ENCODE measurements at regions of chr19 and their contacts with region 1.

Region 1: GRCh38 chr19:52048555-52049501 is at the start of gene ZNF432:
- DNase-seq: peak; percentile 75 to 87 (median 82)
- ATAC-seq: peak; percentile 92
- H3K4me3 ChIP-seq: peak within 1 kb of the TSS; percentile 78
- H3K4me3 Mint-ChIP-seq: peak within 1 kb of the TSS; percentile 95 to 100 (median 98)
- H3K27ac ChIP-seq: peak within 1 kb of the TSS; percentile 97
- H3K27ac Mint-ChIP-seq: peak within 1 kb of the TSS; percentile 97 to 99 (median 99)
- H3K4me1 ChIP-seq: peaks cover 0 to 7% of the 10 kb centered on the region in 2 donors
- H3K4me1 Mint-ChIP-seq: peaks cover 10 to 43% (median 25%) of the 10 kb centered on the region in 7 donors
- H3K27me3 ChIP-seq: no peaks in the 10 kb centered on the region
- H3K27me3 Mint-ChIP-seq: no peaks in the 10 kb centered on the region
- total RNA-seq, gene ZNF432: 13.2 to 25.0 (median 18.1) TPM

Region 2: DNA sequence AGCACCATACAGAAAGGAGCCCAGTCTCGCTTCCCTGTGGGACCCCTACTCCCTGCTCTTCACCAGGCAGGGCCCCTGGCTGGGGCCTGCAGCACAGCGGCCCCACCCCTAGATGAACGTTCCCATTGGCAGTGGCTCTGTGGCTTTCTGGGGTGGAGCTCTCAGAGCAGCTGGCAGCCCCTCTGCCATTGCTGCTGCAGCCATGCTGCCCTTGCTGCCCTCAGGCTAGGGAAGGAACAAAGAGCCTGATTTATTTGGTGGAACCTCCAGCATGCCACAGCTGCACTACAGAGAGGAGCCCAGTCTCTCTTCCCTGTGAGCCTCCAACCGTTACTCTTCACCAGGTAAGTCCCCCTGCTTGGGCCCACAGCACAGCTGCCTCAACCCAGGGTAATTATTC is 523.1 kb before region 1 on chr19:
- CTCF ChIA-PET with region 1: no interaction called
- POLR2A ChIA-PET with region 1: no interaction called
- intact Hi-C with region 1: no loop called
- DNase-seq: no peak
- ATAC-seq: no peak
- H3K4me3 ChIP-seq: no peak overlapping the region
- H3K4me3 Mint-ChIP-seq: no peak overlapping the region
- H3K27ac ChIP-seq: no peak overlapping the region
- H3K27ac Mint-ChIP-seq: no peak overlapping the region
- H3K4me1 ChIP-seq: no peaks in the 10 kb centered on the region
- H3K4me1 Mint-ChIP-seq: peaks cover 0 to 2% (median 0%) of the 10 kb centered on the region in 7 donors
- H3K27me3 ChIP-seq: no peaks in the 10 kb centered on the region
- H3K27me3 Mint-ChIP-seq: peaks cover 27 to 50% (median 33%) of the 10 kb centered on the region in 5 donors

Region 3: GRCh38 chr19:51576850-51577249 is 472.0 kb before region 1 on chr19:
- CTCF ChIA-PET with region 1: no interaction called
- POLR2A ChIA-PET with region 1: no interaction called
- intact Hi-C with region 1: no loop called
- DNase-seq: no peak
- ATAC-seq: no peak
- H3K4me3 ChIP-seq: no peak overlapping the region
- H3K4me3 Mint-ChIP-seq: no peak overlapping the region
- H3K27ac ChIP-seq: no peak overlapping the region
- H3K27ac Mint-ChIP-seq: no peak overlapping the region
- H3K4me1 ChIP-seq: peaks cover 0 to 2% of the 10 kb centered on the region in 2 donors
- H3K4me1 Mint-ChIP-seq: peaks cover 11 to 25% (median 19%) of the 10 kb centered on the region in 7 donors
- H3K27me3 ChIP-seq: no peaks in the 10 kb centered on the region
- H3K27me3 Mint-ChIP-seq: no peaks in the 10 kb centered on the region

Region 4: DNA sequence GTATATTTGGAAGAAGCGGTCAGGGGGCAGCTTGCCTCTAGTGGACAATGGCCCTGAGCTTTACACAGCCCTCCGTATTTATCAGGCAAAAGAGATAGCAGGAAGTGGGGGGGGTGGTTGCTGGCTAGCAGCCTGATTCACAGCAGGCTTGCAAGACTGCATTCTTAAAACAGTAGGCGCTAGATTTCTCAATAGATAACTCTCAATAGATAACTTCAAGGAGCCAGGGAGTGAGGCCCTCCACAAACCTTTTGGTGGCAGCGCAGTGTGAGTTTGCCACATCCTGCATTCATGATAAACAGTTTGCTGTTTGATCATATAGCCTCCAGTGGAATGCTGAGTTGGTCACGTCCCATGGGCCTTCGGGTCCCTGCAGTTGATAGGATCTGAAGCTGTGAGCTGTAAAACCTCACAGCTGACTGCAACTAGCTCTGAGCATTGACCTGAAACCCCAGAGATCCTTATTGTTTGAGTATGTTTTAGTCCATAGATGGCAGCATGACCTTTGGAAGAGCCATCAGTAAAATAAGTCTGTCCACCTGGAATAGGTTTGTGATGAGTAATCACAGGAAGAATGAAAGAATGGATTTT is 241.6 kb before region 1 on chr19:
- CTCF ChIA-PET with region 1: no interaction called
- POLR2A ChIA-PET with region 1: no interaction called
- intact Hi-C with region 1: no loop called
- DNase-seq: no peak
- ATAC-seq: no peak
- H3K4me3 ChIP-seq: no peak overlapping the region
- H3K4me3 Mint-ChIP-seq: no peak overlapping the region
- H3K27ac ChIP-seq: no peak overlapping the region
- H3K27ac Mint-ChIP-seq: no peak overlapping the region
- H3K4me1 ChIP-seq: no peaks in the 10 kb centered on the region
- H3K4me1 Mint-ChIP-seq: peaks cover 0 to 7% (median 0%) of the 10 kb centered on the region in 7 donors
- H3K27me3 ChIP-seq: no peaks in the 10 kb centered on the region
- H3K27me3 Mint-ChIP-seq: peaks cover 0 to 15% (median 3%) of the 10 kb centered on the region in 5 donors

Region 5: DNA sequence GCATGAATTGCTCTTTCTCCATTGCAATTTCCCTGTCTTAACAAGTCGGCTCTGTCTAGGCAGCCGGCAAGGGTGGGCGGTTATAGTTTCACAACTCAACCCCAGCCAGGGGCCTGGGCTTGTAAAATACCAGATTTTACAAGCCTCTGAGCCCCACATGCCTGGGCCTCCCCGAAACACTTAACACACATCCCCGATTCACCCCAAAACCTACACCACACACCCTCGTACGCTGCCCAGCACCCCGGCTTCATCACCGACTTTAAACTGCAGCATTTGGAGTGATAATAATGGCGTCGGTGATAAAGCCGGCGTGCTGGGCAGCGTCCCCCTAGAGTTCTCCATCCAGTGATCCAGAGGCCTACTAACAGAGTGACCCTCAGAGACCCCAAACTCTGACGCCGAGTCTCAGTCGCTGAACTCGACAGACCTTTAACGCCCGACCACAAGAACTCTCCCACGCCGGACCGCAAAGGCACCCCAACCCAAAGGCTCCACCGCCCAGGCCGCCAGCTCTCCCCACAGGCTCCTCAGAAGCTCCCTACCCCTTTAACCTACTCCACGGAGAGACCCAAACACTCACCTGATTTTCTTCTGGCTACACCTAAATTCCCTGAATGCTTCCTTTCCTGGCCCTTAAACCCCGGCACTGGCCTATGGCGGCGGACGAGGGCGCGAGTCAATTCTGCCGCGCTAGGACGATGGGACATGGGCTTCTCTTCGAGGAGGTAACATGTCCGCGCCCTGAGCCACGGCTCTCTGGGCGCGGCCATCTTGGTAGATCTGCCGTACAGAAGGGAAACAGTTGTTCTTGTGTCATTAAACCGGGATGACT is 144.3 kb before region 1 on chr19 and contains the start of gene ZNF649:
- CTCF ChIA-PET with region 1: no interaction called
- POLR2A ChIA-PET with region 1: no interaction called
- intact Hi-C with region 1: loop called (anchors 1 kb)
- DNase-seq: peak; percentile 67 to 84 (median 74)
- ATAC-seq: peak; percentile 98
- H3K4me3 ChIP-seq: peak within 1 kb of the TSS; percentile 84
- H3K4me3 Mint-ChIP-seq: peak within 1 kb of the TSS; percentile 87 to 100 (median 99)
- H3K27ac ChIP-seq: peak within 1 kb of the TSS; percentile 84
- H3K27ac Mint-ChIP-seq: peak within 1 kb of the TSS; percentile 89 to 99 (median 97)
- H3K4me1 ChIP-seq: peaks cover 0 to 5% of the 10 kb centered on the region in 2 donors
- H3K4me1 Mint-ChIP-seq: peaks cover 8 to 33% (median 28%) of the 10 kb centered on the region in 7 donors
- H3K27me3 ChIP-seq: no peaks in the 10 kb centered on the region
- H3K27me3 Mint-ChIP-seq: peaks cover 0 to 31% (median 19%) of the 10 kb centered on the region in 5 donors
- total RNA-seq, gene ZNF649: 11.1 to 33.4 (median 14.5) TPM

Region 6: GRCh38 chr19:51986309-51987291 is 62.2 kb before region 1 on chr19 and contains the start of gene ZNF350:
- CTCF ChIA-PET with region 1: no interaction called
- POLR2A ChIA-PET with region 1: no interaction called
- intact Hi-C with region 1: loop called (anchors 1 kb)
- DNase-seq: peak; percentile 61 to 94 (median 89)
- ATAC-seq: peak; percentile 100
- H3K4me3 ChIP-seq: peak within 1 kb of the TSS; percentile 89
- H3K4me3 Mint-ChIP-seq: peak within 1 kb of the TSS; percentile 93 to 99 (median 96)
- H3K27ac ChIP-seq: peak within 1 kb of the TSS; percentile 82
- H3K27ac Mint-ChIP-seq: peak within 1 kb of the TSS; percentile 91 to 98 (median 94)
- H3K4me1 ChIP-seq: peaks cover 6 to 10% of the 10 kb centered on the region in 2 donors
- H3K4me1 Mint-ChIP-seq: peaks cover 10 to 33% (median 20%) of the 10 kb centered on the region in 7 donors
- H3K27me3 ChIP-seq: no peaks in the 10 kb centered on the region
- H3K27me3 Mint-ChIP-seq: no peaks in the 10 kb centered on the region
- total RNA-seq, gene ZNF350: 18.1 to 43.7 (median 36.0) TPM

Region 7: DNA sequence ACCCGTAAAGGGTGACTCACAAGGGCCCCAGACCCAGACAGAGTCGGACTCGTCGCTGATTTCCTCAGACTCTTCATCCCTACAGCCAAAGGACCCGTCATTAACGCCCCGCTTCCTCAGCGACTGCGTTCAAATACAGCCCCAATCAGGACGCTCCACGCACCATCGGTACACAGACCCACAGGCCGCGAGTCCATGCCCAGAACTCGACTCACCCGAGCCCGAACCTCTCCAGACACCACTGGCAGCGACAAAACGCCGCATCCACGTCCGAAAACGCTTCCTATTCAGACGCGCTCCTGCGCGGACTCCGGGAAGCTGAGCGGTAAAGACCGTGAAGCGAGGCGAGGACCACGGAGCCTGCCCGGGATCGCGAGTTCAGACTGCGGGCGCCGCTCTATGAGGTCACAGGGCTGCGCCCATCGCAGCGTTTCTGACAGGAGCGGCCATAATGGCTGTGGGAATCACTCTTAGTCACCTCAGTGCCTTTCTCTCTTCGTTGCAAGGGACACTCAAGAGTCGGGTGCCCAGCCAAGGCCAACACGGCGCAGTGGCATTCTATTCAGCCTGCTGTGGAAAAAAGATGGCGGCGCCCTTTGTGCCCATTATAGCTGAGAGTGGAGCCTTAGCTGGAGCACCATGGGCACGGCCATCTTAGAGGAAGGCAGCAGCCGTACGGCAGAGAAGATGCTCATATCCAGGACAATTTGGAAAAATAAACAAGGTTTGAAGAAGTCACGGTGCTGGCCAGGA is 20.6 kb before region 1 on chr19 and contains the start of gene ZNF614:
- CTCF ChIA-PET with region 1: no interaction called
- POLR2A ChIA-PET with region 1: interaction called, 25 read pairs
- intact Hi-C with region 1: loop called (anchors 1 kb)
- DNase-seq: peak; percentile 80 to 95 (median 89)
- ATAC-seq: peak; percentile 93
- H3K4me3 ChIP-seq: peak within 1 kb of the TSS; percentile 89
- H3K4me3 Mint-ChIP-seq: peak within 1 kb of the TSS; percentile 89 to 99 (median 96)
- H3K27ac ChIP-seq: peak within 1 kb of the TSS; percentile 90
- H3K27ac Mint-ChIP-seq: peak within 1 kb of the TSS; percentile 91 to 99 (median 96)
- H3K4me1 ChIP-seq: peaks cover 12 to 16% of the 10 kb centered on the region in 2 donors
- H3K4me1 Mint-ChIP-seq: peaks cover 6 to 35% (median 31%) of the 10 kb centered on the region in 7 donors
- H3K27me3 ChIP-seq: no peaks in the 10 kb centered on the region
- H3K27me3 Mint-ChIP-seq: no peaks in the 10 kb centered on the region
- total RNA-seq, gene ZNF614: 5.0 to 14.1 (median 11.1) TPM

Region 8: GRCh38 chr19:52171321-52172169 is 122.7 kb after region 1 on chr19 and contains the start of gene ZNF836:
- CTCF ChIA-PET with region 1: no interaction called
- POLR2A ChIA-PET with region 1: no interaction called
- intact Hi-C with region 1: loop called (anchors 1 to 5 kb)
- DNase-seq: peak; percentile 72 to 95 (median 91)
- ATAC-seq: peak; percentile 98
- H3K4me3 ChIP-seq: peak within 1 kb of the TSS; percentile 92
- H3K4me3 Mint-ChIP-seq: peak within 1 kb of the TSS; percentile 92 to 98 (median 96)
- H3K27ac ChIP-seq: peak within 1 kb of the TSS; percentile 92
- H3K27ac Mint-ChIP-seq: peak within 1 kb of the TSS; percentile 96 to 99 (median 98)
- H3K4me1 ChIP-seq: peaks cover 18 to 19% of the 10 kb centered on the region in 2 donors
- H3K4me1 Mint-ChIP-seq: peaks cover 23 to 48% (median 45%) of the 10 kb centered on the region in 7 donors
- H3K27me3 ChIP-seq: no peaks in the 10 kb centered on the region
- H3K27me3 Mint-ChIP-seq: no peaks in the 10 kb centered on the region
- total RNA-seq, gene ZNF836: 20.1 to 57.5 (median 27.4) TPM

Region 9: DNA sequence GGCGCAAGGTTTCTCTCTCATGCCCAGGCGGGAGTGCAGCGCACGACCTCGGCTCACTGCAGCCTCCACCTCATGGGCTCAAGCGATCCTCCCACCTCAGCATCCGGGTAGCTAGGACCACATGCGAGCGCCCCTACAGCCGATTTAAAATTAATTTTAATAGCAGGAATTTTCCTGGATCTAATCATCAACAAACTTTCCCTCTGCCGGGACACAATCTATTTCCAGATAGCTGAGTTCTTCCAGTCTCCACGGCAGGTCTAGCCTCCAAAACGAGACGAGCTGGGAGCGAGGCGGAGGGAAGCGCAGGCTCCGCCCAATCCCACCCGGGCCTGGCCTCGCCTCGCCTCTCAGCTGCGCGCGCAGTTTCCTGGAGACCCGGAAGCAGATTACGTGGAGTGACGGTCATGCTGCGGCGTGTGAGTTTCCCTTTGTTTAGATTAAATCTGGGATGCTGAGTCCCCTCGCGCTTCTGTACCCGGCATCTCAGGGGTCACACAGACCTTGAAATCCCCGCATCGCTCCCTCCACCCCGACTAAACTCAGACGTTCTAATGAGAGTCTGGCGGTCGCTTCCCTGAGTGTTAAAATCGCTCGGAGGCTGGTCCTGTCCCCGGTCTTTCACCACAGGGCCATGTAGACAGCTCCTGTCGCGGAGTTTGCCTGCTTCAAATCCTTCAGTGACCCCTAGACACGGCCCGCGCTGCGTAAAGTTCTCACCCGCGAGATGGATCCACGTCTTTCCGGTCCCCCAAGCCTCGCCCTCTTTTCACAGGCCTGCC is 320.9 kb after region 1 on chr19 and contains the start of gene ZNF880:
- CTCF ChIA-PET with region 1: no interaction called
- POLR2A ChIA-PET with region 1: no interaction called
- intact Hi-C with region 1: loop called in 1 of 2 experiments (anchors 2 kb)
- DNase-seq: peak; percentile 81 to 92 (median 88)
- ATAC-seq: peak; percentile 97
- H3K4me3 ChIP-seq: peak within 1 kb of the TSS; percentile 100
- H3K4me3 Mint-ChIP-seq: peak within 1 kb of the TSS; percentile 90 to 98 (median 94)
- H3K27ac ChIP-seq: peak within 1 kb of the TSS; percentile 92
- H3K27ac Mint-ChIP-seq: peak within 1 kb of the TSS; percentile 96 to 99 (median 98)
- H3K4me1 ChIP-seq: peaks cover 4 to 5% of the 10 kb centered on the region in 2 donors
- H3K4me1 Mint-ChIP-seq: peaks cover 2 to 19% (median 17%) of the 10 kb centered on the region in 7 donors
- H3K27me3 ChIP-seq: no peaks in the 10 kb centered on the region
- H3K27me3 Mint-ChIP-seq: no peaks in the 10 kb centered on the region
- total RNA-seq, gene ZNF880: 10.3 to 33.5 (median 25.4) TPM

Measured in naive thymus-derived CD4-positive, alpha-beta T cell (primary cell).